ENCODE measurements at regions of chr5 and their contacts with region 1.

Region 1: DNA sequence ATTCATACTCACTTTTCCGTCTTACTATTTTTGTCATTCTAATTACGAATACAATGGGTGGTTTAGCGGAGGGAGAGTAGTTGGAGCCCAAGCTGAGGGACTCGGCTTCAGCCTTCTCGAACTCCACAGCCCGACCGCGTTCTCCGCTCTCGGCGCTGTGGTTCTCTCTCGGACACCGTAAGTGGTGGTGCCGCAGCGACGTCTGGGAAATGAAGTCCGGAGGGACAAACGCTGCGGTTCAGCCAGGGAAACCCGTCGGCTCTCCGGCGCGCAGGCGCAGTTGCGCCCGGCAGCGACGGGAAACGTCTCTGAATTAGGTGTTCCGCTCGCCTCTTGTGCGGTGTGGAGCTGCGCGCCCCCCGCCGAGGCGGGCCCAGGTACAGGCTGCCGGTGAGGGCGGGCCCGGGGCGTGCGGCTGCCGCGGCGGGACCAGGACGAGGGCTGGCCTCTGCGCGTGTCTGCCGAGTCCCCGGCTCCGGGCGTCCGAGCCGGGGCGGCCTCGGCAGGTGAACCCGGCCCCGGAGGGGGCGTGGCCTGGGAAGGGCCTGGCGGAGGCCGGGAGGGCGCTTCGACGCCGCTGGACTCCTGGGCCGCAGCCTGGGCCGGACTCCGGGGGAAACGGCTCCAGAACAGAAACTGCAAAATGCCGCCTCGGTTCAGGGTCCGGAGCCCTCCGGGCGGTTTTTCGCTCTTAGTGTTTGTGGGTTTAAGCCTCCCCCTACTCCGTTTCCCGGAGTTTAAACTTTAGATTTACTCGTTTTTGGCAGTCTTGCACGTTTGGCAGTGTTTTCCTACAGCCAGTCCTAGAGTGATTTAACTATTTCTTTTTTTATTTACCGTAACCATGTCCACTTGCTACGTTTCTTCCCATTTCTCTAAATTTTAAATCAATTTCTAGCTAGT is at the start of gene ZNF879:
- DNase-seq: peak; percentile 89 to 92
- ATAC-seq: peak; percentile 98 to 99
- H3K4me3 ChIP-seq: peak within 1 kb of the TSS; percentile 58 to 82 (median 68)
- H3K27ac ChIP-seq: peak within 1 kb of the TSS; percentile 74 to 89 (median 82)
- H3K4me1 ChIP-seq: peaks cover 7 to 9% of the 10 kb centered on the region in 2 donors
- H3K27me3 ChIP-seq: no peaks in the 10 kb centered on the region
- CTCF ChIP-seq: peak in 2 of 5 experiments; percentile 11 to 14
- POLR2A ChIP-seq: peak; percentile 46 to 60
- total RNA-seq, gene ZNF879: 2.5 to 7.0 (median 3.7) TPM

Region 2: DNA sequence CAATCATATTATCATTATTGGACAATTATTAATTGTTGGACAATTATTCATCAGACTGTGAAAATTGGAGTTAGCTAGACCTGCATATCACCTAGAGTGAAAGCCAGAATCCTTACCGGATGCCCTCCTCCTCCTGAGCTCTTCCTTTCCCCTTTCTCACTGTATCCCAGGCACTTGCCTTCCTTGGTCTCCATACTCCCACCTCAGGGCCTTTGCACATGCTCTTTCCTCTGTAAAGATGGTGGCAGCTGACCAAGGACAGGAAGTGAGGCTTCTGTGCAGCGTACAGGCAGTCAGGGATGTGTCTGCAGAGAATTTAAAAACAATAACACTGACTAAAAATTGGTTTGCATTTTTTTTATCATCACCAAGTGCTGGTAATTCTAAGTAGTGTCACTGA is 1453.9 kb before region 1 on chr5:
- in situ Hi-C with region 1: no loop called
- intact Hi-C with region 1: loop called (anchors 5 kb)
- DNase-seq: no peak
- ATAC-seq: no peak
- H3K4me3 ChIP-seq: no peak overlapping the region
- H3K27ac ChIP-seq: no peak overlapping the region
- H3K4me1 ChIP-seq: no peaks in the 10 kb centered on the region
- H3K27me3 ChIP-seq: no peaks in the 10 kb centered on the region
- CTCF ChIP-seq: no peak
- POLR2A ChIP-seq: no peak

Region 3: GRCh38 chr5:178732281-178732680 is 291.5 kb before region 1 on chr5:
- in situ Hi-C with region 1: no loop called
- intact Hi-C with region 1: loop called (anchors 1 kb)
- DNase-seq: no peak
- ATAC-seq: no peak
- H3K4me3 ChIP-seq: no peak overlapping the region
- H3K27ac ChIP-seq: no peak overlapping the region
- H3K4me1 ChIP-seq: peaks cover 0 to 4% of the 10 kb centered on the region in 2 donors
- H3K27me3 ChIP-seq: no peaks in the 10 kb centered on the region
- CTCF ChIP-seq: no peak
- POLR2A ChIP-seq: no peak

Region 4: DNA sequence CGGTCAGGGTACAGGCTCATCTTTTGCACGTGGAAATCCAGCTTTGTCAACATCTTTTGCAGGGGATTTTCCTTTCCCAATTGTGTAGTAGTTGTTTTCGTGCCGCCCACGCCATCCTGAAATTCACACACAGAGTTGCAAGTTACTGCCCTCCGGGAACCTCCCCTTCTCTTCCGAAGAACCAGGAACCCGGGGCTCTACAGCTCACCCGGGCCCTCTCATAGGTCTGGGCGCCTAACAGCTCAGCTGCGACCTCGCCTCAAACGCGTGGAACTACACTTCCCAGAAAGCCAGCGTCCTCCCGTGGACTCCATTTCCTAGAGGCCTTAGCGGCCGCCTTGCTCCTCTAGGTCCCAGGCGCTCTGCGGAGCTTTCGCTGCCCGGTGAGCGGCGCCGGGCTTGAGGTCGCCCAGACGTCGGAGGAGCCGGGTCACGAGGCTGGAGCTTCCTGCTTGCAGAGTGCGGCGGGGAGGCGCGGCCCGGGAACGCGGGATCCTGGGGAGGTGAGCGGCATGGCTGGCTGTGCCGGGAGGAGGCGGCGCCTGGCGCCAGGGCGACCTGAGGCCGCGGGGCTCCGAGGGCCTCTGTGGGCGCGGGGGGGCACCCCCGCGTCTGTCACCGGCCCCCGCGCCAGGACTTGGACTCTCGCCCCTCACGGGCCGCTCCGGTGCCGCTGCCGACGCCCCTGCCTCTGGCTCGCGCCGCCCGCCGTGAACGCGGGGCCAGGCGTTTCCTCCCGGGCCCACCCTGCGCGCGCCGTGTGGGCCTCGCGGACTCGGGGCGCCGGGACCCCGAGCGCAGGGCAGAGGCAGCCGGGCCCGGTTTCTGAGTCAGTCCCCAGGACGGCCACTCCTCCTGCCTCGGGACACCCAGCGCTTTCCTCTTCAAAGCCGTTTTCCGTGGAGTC is 163.9 kb before region 1 on chr5 and contains the start of gene ZNF354B:
- in situ Hi-C with region 1: no loop called
- intact Hi-C with region 1: loop called (anchors 1 kb)
- DNase-seq: peak; percentile 86
- ATAC-seq: peak; percentile 99
- H3K4me3 ChIP-seq: peak within 1 kb of the TSS; percentile 61 to 78 (median 66)
- H3K27ac ChIP-seq: peak within 1 kb of the TSS; percentile 70 to 85 (median 81)
- H3K4me1 ChIP-seq: peaks cover 2 to 6% of the 10 kb centered on the region in 2 donors
- H3K27me3 ChIP-seq: no peaks in the 10 kb centered on the region
- CTCF ChIP-seq: peak in 1 of 5 experiments; percentile 29
- POLR2A ChIP-seq: peak; percentile 61 to 73
- total RNA-seq, gene ZNF354B: 4.4 to 11.3 (median 5.0) TPM

Region 5: DNA sequence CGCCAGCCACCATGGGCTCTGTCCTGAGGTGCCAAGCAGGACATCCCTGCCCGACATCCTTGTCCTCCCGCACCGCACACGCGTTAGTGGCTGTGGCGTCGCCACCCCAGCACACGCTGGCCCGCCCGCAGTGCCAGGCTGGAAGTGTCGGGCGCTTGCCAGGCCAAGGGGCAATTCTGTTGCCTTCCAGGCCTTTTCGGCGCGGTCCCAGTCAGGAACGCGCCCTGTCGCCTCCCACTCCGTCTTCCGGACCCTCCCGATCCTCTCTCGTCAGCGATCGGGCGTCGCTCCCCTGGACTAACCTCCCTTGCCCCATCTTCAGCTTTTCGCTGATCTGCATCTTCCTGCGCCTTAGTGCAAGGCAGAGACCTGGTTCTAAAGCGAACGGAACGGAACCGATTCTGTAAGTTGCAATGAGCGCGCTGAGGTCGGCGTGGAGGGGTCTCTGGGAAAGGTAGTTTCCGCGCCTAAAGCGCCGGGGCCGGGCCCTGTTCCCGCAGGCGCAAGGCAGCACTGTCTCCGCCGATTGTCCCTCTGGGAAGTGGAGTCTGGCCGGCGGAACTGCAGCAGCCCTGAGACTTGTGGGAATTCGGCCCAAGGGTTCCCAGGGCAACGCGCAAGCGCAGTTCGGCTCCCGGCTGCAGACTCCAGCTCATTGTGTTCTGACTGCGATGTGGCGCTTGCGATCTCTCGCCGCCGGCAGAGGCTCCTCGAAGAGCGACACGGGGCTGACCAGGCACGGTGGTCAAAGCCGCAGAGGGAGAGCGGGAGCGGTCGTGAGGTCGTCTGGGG is 83.0 kb before region 1 on chr5 and contains the start of gene ZNF454:
- in situ Hi-C with region 1: no loop called
- intact Hi-C with region 1: loop called (anchors 5 kb)
- DNase-seq: peak; percentile 47 to 50
- ATAC-seq: peak; percentile 49 to 50
- H3K4me3 ChIP-seq: peak within 1 kb of the TSS; percentile 53 to 59 (median 57)
- H3K27ac ChIP-seq: peak within 1 kb of the TSS; percentile 15 to 46 (median 26)
- H3K4me1 ChIP-seq: no peaks in the 10 kb centered on the region
- H3K27me3 ChIP-seq: peaks cover 0 to 21% (median 13%) of the 10 kb centered on the region in 3 donors
- CTCF ChIP-seq: no peak
- POLR2A ChIP-seq: no peak
- total RNA-seq, gene ZNF454: 0.17 to 0.71 (median 0.36) TPM

Region 6: DNA sequence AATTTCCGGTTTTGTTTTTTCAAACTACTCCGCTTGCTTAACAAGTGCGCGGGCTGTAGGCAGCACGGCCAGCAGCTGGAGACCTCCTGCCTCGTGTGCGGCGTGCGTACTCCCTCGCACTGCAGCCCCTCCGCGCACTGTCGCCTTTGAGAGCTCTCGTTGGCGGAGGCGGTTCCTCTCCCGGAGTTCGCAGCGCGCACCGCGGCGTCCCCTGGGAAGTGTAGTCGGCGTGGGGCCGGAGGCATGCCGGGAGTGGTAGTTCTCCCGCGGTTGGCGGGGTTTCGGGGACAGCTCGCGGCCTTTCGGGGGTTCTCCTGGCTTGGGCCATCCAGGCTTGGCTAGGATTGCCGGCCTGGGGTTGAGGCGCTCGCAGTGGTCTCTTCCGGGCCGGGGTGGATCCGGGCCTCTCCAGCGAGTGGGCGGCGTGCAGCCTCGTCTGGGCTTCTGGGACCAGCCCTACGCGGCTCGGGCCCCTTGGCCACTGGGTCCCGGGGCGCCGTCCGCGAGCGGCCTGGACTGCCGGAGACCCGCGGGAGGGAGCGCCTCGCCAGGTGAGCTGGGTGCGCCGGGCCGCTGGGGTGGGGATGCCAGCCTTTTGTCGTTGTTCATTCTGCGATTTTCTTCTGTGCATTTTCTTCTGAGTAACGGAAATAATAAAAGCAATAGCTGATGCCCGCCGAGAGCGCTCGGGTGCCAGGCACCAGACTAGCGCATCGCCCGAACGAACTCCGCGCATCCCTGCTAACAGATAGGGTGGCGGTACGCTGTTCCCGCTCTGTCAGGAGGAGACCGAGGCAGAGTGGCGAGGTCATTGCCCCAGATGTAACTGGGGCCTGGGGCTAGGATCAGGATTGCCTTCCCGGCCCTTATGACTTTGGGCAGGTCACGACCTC is 36.6 kb after region 1 on chr5 and contains the start of gene ZNF354C:
- in situ Hi-C with region 1: no loop called
- intact Hi-C with region 1: loop called (anchors 1 kb)
- DNase-seq: peak; percentile 74 to 77
- ATAC-seq: peak; percentile 90 to 95
- H3K4me3 ChIP-seq: peak within 1 kb of the TSS; percentile 71 to 91 (median 84)
- H3K27ac ChIP-seq: peak within 1 kb of the TSS; percentile 63 to 76 (median 74)
- H3K4me1 ChIP-seq: peaks cover 5 to 7% of the 10 kb centered on the region in 2 donors
- H3K27me3 ChIP-seq: peaks cover 0 to 4% (median 0%) of the 10 kb centered on the region in 3 donors
- CTCF ChIP-seq: peak in 1 of 5 experiments; percentile 15
- POLR2A ChIP-seq: peak in 1 of 2 donors; percentile 48
- total RNA-seq, gene ZNF354C: 1.6 to 3.5 (median 2.3) TPM

Region 7: DNA sequence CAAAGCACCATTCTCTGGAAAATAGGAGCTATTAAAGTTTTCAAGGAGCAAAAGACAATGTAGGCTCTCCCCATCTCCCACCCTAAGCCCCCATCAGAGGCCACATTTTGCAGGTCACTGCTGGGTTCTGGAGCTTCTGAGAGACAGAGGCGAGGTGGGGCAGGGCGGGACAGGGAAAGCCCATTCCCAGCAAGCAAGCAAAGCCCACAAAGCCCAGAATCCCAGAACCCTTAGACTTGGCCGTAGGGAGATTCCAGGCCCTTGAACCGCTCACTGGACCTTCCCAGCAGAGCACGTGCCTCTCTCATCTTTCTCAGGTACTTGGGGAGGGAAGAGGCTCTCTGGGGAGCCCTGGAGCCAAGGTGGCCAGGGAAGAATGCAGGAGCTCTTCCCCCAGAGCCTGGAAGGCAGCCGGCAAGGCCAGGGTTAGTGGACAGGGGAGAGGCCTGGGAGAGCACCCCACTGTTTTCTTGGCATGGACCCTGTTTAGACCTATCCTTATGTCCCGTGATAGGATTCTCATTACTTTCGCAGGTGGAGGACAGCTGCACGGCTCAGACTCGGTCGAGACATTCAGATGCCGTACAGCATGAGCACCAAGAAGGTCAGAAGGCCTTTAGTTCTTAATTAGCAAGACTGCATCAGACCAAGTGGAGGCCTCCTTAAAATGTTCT is 88.8 kb after region 1 on chr5:
- in situ Hi-C with region 1: no loop called
- intact Hi-C with region 1: no loop called
- DNase-seq: no peak
- ATAC-seq: no peak
- H3K4me3 ChIP-seq: no peak overlapping the region
- H3K27ac ChIP-seq: no peak overlapping the region
- H3K4me1 ChIP-seq: no peaks in the 10 kb centered on the region
- H3K27me3 ChIP-seq: no peaks in the 10 kb centered on the region
- CTCF ChIP-seq: no peak
- POLR2A ChIP-seq: no peak

Region 8: GRCh38 chr5:179559284-179560252 is 535.8 kb after region 1 on chr5:
- in situ Hi-C with region 1: no loop called
- intact Hi-C with region 1: loop called (anchors 10 kb)
- DNase-seq: peak; percentile 95 to 98
- ATAC-seq: peak; percentile 100
- H3K4me3 ChIP-seq: peak overlapping the region; percentile 56 to 63 (median 58)
- H3K27ac ChIP-seq: peak overlapping the region; percentile 73 to 87 (median 79)
- H3K4me1 ChIP-seq: peaks cover 9 to 24% of the 10 kb centered on the region in 2 donors
- H3K27me3 ChIP-seq: no peaks in the 10 kb centered on the region
- CTCF ChIP-seq: no peak
- POLR2A ChIP-seq: peak; percentile 84 to 90